ENCODE measurements at regions of chr2 and their contacts with region 1.

Region 1: GRCh38 chr2:226118471-226119430 is 680.9 kb downstream of the IRS1 start:
- DNase-seq: peak; percentile 94
- H3K4me3 Mint-ChIP-seq: peak overlapping the region; percentile 63
- H3K27ac Mint-ChIP-seq: peak overlapping the region; percentile 65
- H3K4me1 Mint-ChIP-seq: peaks cover 59% of the 10 kb centered on the region
- H3K27me3 Mint-ChIP-seq: no peaks in the 10 kb centered on the region
- CTCF ChIP-seq: no peak

Region 2: GRCh38 chr2:225566798-225567197 is 552.0 kb before region 1 on chr2:
- CTCF ChIA-PET with region 1: no interaction called
- POLR2A ChIA-PET with region 1: no interaction called
- intact Hi-C with region 1: no loop called
- DNase-seq: peak; percentile 54
- H3K4me3 Mint-ChIP-seq: no peak overlapping the region
- H3K27ac Mint-ChIP-seq: no peak overlapping the region
- H3K4me1 Mint-ChIP-seq: no peaks in the 10 kb centered on the region
- H3K27me3 Mint-ChIP-seq: peaks cover 49% of the 10 kb centered on the region
- CTCF ChIP-seq: no peak

Region 3: GRCh38 chr2:225668606-225669266 is 450.0 kb before region 1 on chr2:
- CTCF ChIA-PET with region 1: interaction called, 4 read pairs
- POLR2A ChIA-PET with region 1: interaction called, 3 read pairs
- intact Hi-C with region 1: loop called (anchors 2 kb)
- DNase-seq: peak; percentile 77
- H3K4me3 Mint-ChIP-seq: no peak overlapping the region
- H3K27ac Mint-ChIP-seq: no peak overlapping the region
- H3K4me1 Mint-ChIP-seq: peaks cover 5% of the 10 kb centered on the region
- H3K27me3 Mint-ChIP-seq: no peaks in the 10 kb centered on the region
- CTCF ChIP-seq: peak; percentile 74

Region 4: GRCh38 chr2:226030788-226031646 is 87.7 kb before region 1 on chr2:
- CTCF ChIA-PET with region 1: interaction called, 3 read pairs
- POLR2A ChIA-PET with region 1: interaction called, 8 read pairs
- intact Hi-C with region 1: loop called (anchors 5 kb)
- DNase-seq: peak; percentile 51
- H3K4me3 Mint-ChIP-seq: peak overlapping the region; percentile 74
- H3K27ac Mint-ChIP-seq: no peak overlapping the region
- H3K4me1 Mint-ChIP-seq: peaks cover 21% of the 10 kb centered on the region
- H3K27me3 Mint-ChIP-seq: no peaks in the 10 kb centered on the region
- CTCF ChIP-seq: no peak

Region 5: GRCh38 chr2:226137201-226137811 is 18.6 kb after region 1 on chr2:
- CTCF ChIA-PET with region 1: no interaction called
- POLR2A ChIA-PET with region 1: interaction called, 33 read pairs
- intact Hi-C with region 1: no loop called
- DNase-seq: peak; percentile 25
- H3K4me3 Mint-ChIP-seq: no peak overlapping the region
- H3K27ac Mint-ChIP-seq: peak overlapping the region; percentile 82
- H3K4me1 Mint-ChIP-seq: peaks cover 9% of the 10 kb centered on the region
- H3K27me3 Mint-ChIP-seq: no peaks in the 10 kb centered on the region
- CTCF ChIP-seq: no peak

Region 6: GRCh38 chr2:226423498-226423960 is 304.8 kb after region 1 on chr2:
- CTCF ChIA-PET with region 1: no interaction called
- POLR2A ChIA-PET with region 1: interaction called, 4 read pairs
- intact Hi-C with region 1: loop called (anchors 5 kb)
- DNase-seq: no peak
- H3K4me3 Mint-ChIP-seq: no peak overlapping the region
- H3K27ac Mint-ChIP-seq: no peak overlapping the region
- H3K4me1 Mint-ChIP-seq: peaks cover 26% of the 10 kb centered on the region
- H3K27me3 Mint-ChIP-seq: no peaks in the 10 kb centered on the region
- CTCF ChIP-seq: no peak

Region 7: GRCh38 chr2:226799181-226799975 is 680.6 kb after region 1 on chr2 and contains the start of gene IRS1:
- CTCF ChIA-PET with region 1: interaction called, 6 read pairs
- POLR2A ChIA-PET with region 1: interaction called, 94 read pairs
- intact Hi-C with region 1: loop called (anchors 1 kb)
- DNase-seq: peak; percentile 55
- H3K4me3 Mint-ChIP-seq: peak within 1 kb of the TSS; percentile 73
- H3K27ac Mint-ChIP-seq: no peak within 1 kb of the TSS
- H3K4me1 Mint-ChIP-seq: peaks cover 24% of the 10 kb centered on the region
- H3K27me3 Mint-ChIP-seq: no peaks in the 10 kb centered on the region
- CTCF ChIP-seq: peak; percentile 35
- total RNA-seq, gene IRS1: 6.1 and 10.5 TPM in 2 replicates